Activated naive CD4-positive, alpha-beta T cell treated with anti-CD3 and anti-CD28 coated beads for 36 hours (primary cell): ENCODE measurements at regions of chr1 and their contacts with region 1.

Region 1: GRCh38 chr1:24235921-24236781 is 49.1 kb upstream of the IFNLR1 start:
- DNase-seq: peak; percentile 81
- H3K4me3 Mint-ChIP-seq: no peak overlapping the region
- H3K27ac Mint-ChIP-seq: no peak overlapping the region
- H3K4me1 Mint-ChIP-seq: peaks cover 14% of the 10 kb centered on the region
- H3K27me3 Mint-ChIP-seq: peaks cover 11% of the 10 kb centered on the region

Region 2: DNA sequence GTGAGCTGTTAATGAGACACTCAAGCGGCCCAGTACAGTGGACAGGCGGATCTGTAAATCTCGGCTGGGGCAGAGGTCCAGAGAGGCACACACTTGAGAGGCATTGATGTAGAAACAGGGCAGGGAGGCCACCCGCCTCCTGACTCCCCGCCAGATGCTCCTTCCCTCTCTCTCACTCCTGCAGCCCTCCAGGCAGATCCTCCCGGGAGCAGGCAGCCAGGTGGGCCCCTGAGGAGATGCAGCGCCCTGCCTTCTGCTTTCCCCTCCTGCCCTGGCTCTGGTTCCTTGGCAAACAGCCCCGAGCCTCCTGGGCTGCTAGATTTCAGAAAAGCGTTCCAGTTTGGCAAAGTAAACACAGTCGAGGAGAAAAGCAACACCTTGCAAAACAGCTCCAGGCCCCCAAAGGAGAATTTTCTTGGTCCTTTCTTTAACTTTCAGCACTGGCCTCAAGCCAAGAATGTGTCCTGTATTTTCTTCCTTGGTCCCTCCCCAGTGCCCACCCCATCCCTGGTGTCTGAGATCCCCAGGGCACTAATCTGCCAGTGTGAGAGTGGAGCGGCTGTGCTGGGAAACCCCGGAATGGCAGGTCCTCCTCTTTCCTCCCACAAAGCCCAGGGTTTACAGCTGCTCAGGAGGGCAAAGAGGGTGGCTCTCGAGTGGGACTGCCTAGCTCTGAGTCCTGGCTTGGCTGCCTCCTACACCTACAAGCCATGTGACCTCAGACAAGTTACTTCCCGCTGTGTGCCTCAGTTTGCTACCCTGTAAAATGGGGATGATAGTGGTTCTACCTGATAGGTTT is 19.7 kb before region 1 on chr1:
- CTCF ChIA-PET with region 1: no interaction called
- intact Hi-C with region 1: no loop called
- DNase-seq: no peak
- H3K4me3 Mint-ChIP-seq: no peak overlapping the region
- H3K27ac Mint-ChIP-seq: no peak overlapping the region
- H3K4me1 Mint-ChIP-seq: no peaks in the 10 kb centered on the region
- H3K27me3 Mint-ChIP-seq: peaks cover 20% of the 10 kb centered on the region

Region 3: GRCh38 chr1:24277420-24278169 is 41.4 kb after region 1 on chr1:
- CTCF ChIA-PET with region 1: no interaction called
- intact Hi-C with region 1: loop called (anchors 1 kb)
- DNase-seq: peak; percentile 54
- H3K4me3 Mint-ChIP-seq: no peak overlapping the region
- H3K27ac Mint-ChIP-seq: no peak overlapping the region
- H3K4me1 Mint-ChIP-seq: peaks cover 9% of the 10 kb centered on the region
- H3K27me3 Mint-ChIP-seq: peaks cover 14% of the 10 kb centered on the region

Region 4: GRCh38 chr1:24308365-24309015 is 72.3 kb after region 1 on chr1:
- CTCF ChIA-PET with region 1: no interaction called
- intact Hi-C with region 1: loop called (anchors 2 kb)
- DNase-seq: no peak
- H3K4me3 Mint-ChIP-seq: no peak overlapping the region
- H3K27ac Mint-ChIP-seq: no peak overlapping the region
- H3K4me1 Mint-ChIP-seq: peaks cover 3% of the 10 kb centered on the region
- H3K27me3 Mint-ChIP-seq: peaks cover 6% of the 10 kb centered on the region